ENCODE measurements at regions of chr10 and their contacts with region 1.

Region 1: DNA sequence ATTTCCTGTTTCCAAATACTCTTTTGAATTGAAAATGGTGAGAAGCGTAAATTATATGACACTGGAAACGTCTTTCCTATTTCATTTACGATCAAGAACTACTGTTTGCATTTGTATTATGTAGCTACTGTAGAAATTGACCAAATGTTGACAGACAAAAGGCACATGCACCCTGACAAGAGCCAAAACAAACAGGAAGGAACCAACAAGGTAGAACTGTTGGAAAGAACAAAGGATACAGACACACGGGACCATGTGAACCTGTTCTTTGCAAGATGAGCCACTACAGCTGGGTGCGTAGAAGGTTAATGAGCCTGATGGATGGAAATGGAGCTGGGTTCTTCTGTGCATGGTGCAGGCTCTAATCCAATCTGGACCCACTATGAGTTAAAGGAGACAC is 48.4 kb upstream of the FZD8 start:
- DNase-seq: no peak
- H3K4me3 Mint-ChIP-seq: no peak overlapping the region
- H3K27ac Mint-ChIP-seq: no peak overlapping the region
- H3K4me1 Mint-ChIP-seq: no peaks in the 10 kb centered on the region
- H3K27me3 Mint-ChIP-seq: peaks cover 6% of the 10 kb centered on the region

Region 2: DNA sequence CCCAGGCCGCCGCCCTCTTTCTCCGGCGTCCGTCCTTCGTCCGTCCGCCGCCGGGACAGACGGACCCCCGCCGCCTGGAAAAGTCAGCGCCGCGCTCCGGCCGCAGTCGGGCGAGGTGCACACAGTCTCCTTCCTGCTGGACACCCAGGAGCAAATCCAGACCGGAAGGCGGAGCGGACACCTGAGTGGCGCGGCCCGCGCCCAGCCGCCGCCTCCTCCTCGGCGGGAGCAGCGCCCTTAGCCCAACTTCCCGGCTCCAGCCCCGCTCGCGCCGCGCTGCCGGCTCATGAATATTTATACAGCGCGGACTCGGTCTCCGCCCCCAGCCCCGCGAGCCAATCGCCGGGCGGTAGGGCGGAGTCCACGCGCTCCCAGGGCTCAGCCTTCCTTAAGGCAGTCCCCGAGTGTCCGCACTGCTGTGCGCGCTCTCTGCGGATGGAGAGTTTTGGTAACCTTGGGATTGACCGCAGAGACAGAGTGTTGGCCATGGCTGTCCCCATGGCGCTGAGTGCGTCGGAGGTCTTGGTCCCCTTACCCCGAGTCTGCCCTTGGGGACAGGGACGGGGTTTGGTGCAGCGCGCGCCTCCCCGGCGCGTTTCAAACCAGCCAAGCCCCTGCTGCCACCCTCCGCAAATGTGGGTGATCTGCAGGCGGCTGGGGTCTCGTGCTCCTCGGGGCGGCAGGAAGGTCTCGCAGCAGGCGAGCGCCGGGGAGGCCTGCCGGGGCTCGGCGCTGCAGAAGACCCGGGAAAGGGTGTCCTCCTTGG is 48.3 kb before region 1 on chr10 and contains the start of gene FZD8:
- CTCF ChIA-PET with region 1: no interaction called
- intact Hi-C with region 1: no loop called
- DNase-seq: peak; percentile 75
- H3K4me3 Mint-ChIP-seq: peak within 1 kb of the TSS; percentile 78
- H3K27ac Mint-ChIP-seq: no peak within 1 kb of the TSS
- H3K4me1 Mint-ChIP-seq: peaks cover 19% of the 10 kb centered on the region
- H3K27me3 Mint-ChIP-seq: peaks cover 41% of the 10 kb centered on the region
- total RNA-seq, gene FZD8: 0.15 to 0.19 TPM

Region 3: DNA sequence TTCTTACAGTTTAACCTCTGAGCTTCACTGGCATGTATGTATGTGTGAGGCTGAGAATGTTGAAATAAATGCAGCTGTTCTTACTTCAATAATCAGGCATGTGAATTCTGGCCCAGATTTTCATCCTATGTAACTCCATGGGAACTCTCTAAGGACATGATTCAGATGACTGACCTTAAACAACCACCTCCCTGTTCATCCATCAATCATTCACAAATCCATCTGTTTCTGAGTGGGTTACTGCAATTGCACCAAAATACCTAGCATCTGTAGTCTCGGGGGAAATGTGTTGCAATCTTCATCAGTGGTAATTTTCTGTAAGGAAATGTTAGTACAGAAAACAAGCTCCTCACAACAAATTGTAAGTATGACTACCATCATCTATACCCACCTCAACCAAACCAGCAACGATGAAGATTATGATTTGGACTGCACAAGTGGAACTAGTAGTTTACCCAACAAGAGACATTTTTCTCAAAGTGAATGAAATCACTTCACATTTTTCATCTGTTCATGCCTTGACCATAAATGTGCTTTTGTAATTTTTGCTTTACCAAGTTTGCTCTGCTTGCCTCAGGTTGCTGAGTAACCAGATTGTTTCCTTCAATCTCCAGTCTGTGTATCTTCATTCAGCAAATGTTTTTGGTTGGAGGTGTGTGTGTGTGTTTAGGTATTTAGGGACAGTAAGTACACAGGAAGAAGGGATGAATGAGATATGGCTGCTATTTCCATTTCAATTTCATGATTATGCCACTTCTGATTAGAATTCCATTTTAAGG is 17.3 kb after region 1 on chr10:
- CTCF ChIA-PET with region 1: no interaction called
- intact Hi-C with region 1: no loop called
- DNase-seq: no peak
- H3K4me3 Mint-ChIP-seq: no peak overlapping the region
- H3K27ac Mint-ChIP-seq: no peak overlapping the region
- H3K4me1 Mint-ChIP-seq: no peaks in the 10 kb centered on the region
- H3K27me3 Mint-ChIP-seq: peaks cover 20% of the 10 kb centered on the region

Region 4: DNA sequence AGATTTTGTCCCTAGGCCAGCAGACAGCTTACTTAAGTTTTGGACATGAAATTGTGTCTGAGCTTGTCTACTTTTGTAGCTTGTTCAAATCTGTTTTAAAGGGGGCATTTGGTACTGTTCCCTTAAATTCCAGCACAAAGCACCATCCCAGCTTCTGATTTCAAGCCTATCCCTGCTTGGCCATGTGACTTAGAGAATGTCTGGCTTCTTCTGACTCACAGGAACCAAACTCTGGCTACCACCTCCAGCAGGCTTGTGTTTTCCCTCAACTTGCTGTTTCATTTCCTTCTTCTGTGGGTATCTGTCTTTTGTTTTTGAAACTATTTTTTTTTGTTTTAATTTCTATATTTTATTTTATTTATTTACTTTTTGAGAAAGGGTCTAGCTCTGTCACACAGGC is 49.5 kb after region 1 on chr10:
- CTCF ChIA-PET with region 1: no interaction called
- intact Hi-C with region 1: loop called (anchors 10 kb)
- DNase-seq: no peak
- H3K4me3 Mint-ChIP-seq: no peak overlapping the region
- H3K27ac Mint-ChIP-seq: no peak overlapping the region
- H3K4me1 Mint-ChIP-seq: no peaks in the 10 kb centered on the region
- H3K27me3 Mint-ChIP-seq: peaks cover 2% of the 10 kb centered on the region